ENCODE measurements at regions of chr12 and their contacts with region 1.

Region 1: DNA sequence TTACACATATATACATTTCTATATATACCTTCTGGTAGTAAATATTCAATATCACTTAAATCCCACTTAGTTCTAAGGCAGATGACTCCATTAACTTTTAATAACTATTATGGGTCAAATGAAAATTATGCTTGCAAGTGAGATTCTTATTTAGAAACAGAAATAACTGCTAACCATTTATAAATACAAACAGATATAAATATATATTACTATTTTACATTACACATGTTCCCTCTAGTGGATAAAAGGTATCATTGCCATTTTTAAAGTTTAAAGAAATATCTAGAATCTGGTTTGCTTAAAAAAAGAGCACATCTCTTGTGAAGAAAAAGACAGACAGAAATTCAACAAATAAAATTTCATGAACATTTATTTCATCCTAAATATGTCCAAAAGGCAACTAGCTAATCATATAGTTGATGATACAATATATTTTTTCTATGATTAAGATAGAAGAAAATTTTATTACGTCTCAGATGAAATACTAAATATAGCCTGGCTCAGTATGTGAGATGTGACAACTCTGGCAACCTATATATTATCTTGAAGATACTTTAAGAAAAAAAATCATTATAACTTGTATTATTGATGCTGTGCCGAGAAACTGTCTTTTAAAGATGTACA is 11.7 kb upstream of the RAD51AP1 start:
- H3K4me3 ChIP-seq: no peak overlapping the region
- H3K27ac ChIP-seq: no peak overlapping the region
- H3K4me1 ChIP-seq: no peaks in the 10 kb centered on the region
- CTCF ChIP-seq: no peak

Region 2: GRCh38 chr12:4307593-4308333 is 219.3 kb before region 1 on chr12:
- CTCF ChIA-PET with region 1: interaction called, 26 read pairs
- POLR2A ChIA-PET with region 1: no interaction called
- H3K4me3 ChIP-seq: peak overlapping the region; percentile 15
- H3K27ac ChIP-seq: 0 out of 2 replicates have a peak overlapping the region, but pooled peaks have one; percentile 41
- H3K4me1 ChIP-seq: peaks cover 7% of the 10 kb centered on the region; the same call in 1 of the 2 replicates
- CTCF ChIP-seq: peak; percentile 92